Naive thymus-derived CD4-positive, alpha-beta T cell (primary cell): ENCODE measurements at regions of chr2 and their contacts with region 1.

Region 1: GRCh38 chr2:42810121-42810970 is 18.0 kb upstream of the HAAO start:
- DNase-seq: peak; percentile 96 to 99 (median 98)
- ATAC-seq: peak; percentile 90
- H3K4me3 ChIP-seq: peak overlapping the region; percentile 99
- H3K4me3 Mint-ChIP-seq: peak overlapping the region; percentile 90 to 99 (median 98)
- H3K27ac ChIP-seq: peak overlapping the region; percentile 99
- H3K27ac Mint-ChIP-seq: peak overlapping the region; percentile 93 to 100 (median 99)
- H3K4me1 ChIP-seq: peaks cover 0 to 3% of the 10 kb centered on the region in 2 donors
- H3K4me1 Mint-ChIP-seq: peaks cover 0 to 35% (median 20%) of the 10 kb centered on the region in 7 donors
- H3K27me3 ChIP-seq: no peaks in the 10 kb centered on the region
- H3K27me3 Mint-ChIP-seq: peaks cover 0 to 28% (median 0%) of the 10 kb centered on the region in 5 donors

Region 2: GRCh38 chr2:42360890-42361727 is 449.2 kb before region 1 on chr2 and contains the start of gene COX7A2L:
- CTCF ChIA-PET with region 1: no interaction called
- POLR2A ChIA-PET with region 1: interaction called, 21 read pairs
- intact Hi-C with region 1: loop called (anchors 1 kb)
- DNase-seq: peak; percentile 88 to 97 (median 96)
- ATAC-seq: peak; percentile 98
- H3K4me3 ChIP-seq: peak within 1 kb of the TSS; percentile 82
- H3K4me3 Mint-ChIP-seq: peak within 1 kb of the TSS; percentile 87 to 98 (median 95)
- H3K27ac ChIP-seq: peak within 1 kb of the TSS; percentile 92
- H3K27ac Mint-ChIP-seq: peak within 1 kb of the TSS; percentile 90 to 100 (median 98)
- H3K4me1 ChIP-seq: peaks cover 23 to 24% of the 10 kb centered on the region in 2 donors
- H3K4me1 Mint-ChIP-seq: peaks cover 33 to 56% (median 51%) of the 10 kb centered on the region in 7 donors
- H3K27me3 ChIP-seq: no peaks in the 10 kb centered on the region
- H3K27me3 Mint-ChIP-seq: no peaks in the 10 kb centered on the region
- total RNA-seq, gene COX7A2L: 57.3 to 87.7 (median 81.5) TPM

Region 3: GRCh38 chr2:42663106-42663780 is 147.1 kb before region 1 on chr2:
- CTCF ChIA-PET with region 1: interaction called, 3 read pairs
- POLR2A ChIA-PET with region 1: no interaction called
- intact Hi-C with region 1: loop called in 1 of 2 experiments (anchors 5 kb)
- DNase-seq: peak; percentile 26 to 85 (median 75)
- ATAC-seq: peak; percentile 96
- H3K4me3 ChIP-seq: no peak overlapping the region
- H3K4me3 Mint-ChIP-seq: peak overlapping the region in 7 of 10 donors; percentile 31 to 69 (median 53)
- H3K27ac ChIP-seq: peak overlapping the region; percentile 43
- H3K27ac Mint-ChIP-seq: peak overlapping the region in 8 of 9 donors; percentile 29 to 95 (median 83)
- H3K4me1 ChIP-seq: peaks cover 0 to 5% of the 10 kb centered on the region in 2 donors
- H3K4me1 Mint-ChIP-seq: peaks cover 8 to 60% (median 25%) of the 10 kb centered on the region in 7 donors
- H3K27me3 ChIP-seq: no peaks in the 10 kb centered on the region
- H3K27me3 Mint-ChIP-seq: no peaks in the 10 kb centered on the region

Region 4: DNA sequence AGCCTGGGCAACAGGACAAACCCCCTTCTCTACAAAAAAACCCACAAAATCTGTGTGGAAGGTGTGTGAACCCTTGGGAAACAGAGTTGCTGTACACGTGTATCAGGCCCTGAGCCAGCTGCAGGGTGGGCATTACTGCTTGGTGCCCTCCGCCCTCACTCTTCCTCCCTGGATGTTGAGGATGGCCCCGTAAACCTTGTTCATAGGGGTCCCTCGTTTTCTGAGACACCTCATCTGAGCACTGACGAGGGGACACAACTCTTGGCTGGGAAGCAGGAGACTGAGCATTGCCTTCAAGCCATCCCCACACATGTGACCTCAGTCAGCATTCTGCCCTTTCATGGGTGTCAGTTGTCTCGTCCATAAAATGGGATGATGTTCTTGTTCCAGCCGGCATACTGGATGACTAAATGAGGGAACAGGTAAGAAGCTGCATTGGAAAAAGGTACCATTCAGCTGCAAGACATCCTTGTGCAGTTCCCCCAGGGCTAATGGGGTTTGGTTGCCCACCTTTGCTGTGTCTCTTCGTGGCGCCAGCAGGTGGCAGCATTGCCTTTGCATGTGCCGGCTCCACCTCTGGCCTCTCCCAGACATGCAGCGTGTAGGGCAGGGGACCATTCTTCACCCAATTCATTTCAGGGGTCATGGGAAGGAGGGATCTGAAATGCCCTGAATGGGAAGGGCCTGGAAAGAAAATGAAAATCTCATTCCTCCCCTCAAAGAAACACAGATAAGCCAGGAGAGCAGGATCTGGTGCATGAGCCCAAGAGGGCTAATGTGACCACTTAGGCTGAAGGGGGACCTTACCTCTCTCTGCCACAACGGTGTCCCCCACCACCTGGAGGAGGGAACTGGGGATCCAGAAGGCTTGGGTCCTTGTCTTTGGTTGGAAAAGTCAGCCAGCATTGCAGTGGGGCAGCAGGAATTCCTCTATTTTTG is 18.4 kb after region 1 on chr2:
- CTCF ChIA-PET with region 1: interaction called, 7 read pairs
- POLR2A ChIA-PET with region 1: interaction called, 8 read pairs
- intact Hi-C with region 1: loop called (anchors 1 kb)
- DNase-seq: peak; percentile 44 to 69 (median 63)
- ATAC-seq: peak; percentile 93
- H3K4me3 ChIP-seq: no peak overlapping the region
- H3K4me3 Mint-ChIP-seq: peak overlapping the region in 6 of 10 donors; percentile 18 to 47 (median 21)
- H3K27ac ChIP-seq: no peak overlapping the region
- H3K27ac Mint-ChIP-seq: peak overlapping the region in 2 of 9 donors; percentile 21 to 25
- H3K4me1 ChIP-seq: peaks cover 3 to 6% of the 10 kb centered on the region in 2 donors
- H3K4me1 Mint-ChIP-seq: peaks cover 7 to 19% (median 14%) of the 10 kb centered on the region in 7 donors
- H3K27me3 ChIP-seq: no peaks in the 10 kb centered on the region
- H3K27me3 Mint-ChIP-seq: peaks cover 0 to 8% (median 5%) of the 10 kb centered on the region in 5 donors

Region 5: GRCh38 chr2:43210467-43211303 is 400.3 kb after region 1 on chr2:
- CTCF ChIA-PET with region 1: no interaction called
- POLR2A ChIA-PET with region 1: no interaction called
- intact Hi-C with region 1: no loop called
- DNase-seq: peak in 7 of 9 donors; percentile 34 to 67 (median 61)
- ATAC-seq: peak; percentile 81
- H3K4me3 ChIP-seq: no peak overlapping the region
- H3K4me3 Mint-ChIP-seq: peak overlapping the region in 9 of 10 donors; percentile 7 to 81 (median 56)
- H3K27ac ChIP-seq: no peak overlapping the region
- H3K27ac Mint-ChIP-seq: peak overlapping the region; percentile 2 to 94 (median 82)
- H3K4me1 ChIP-seq: peaks cover 0 to 27% of the 10 kb centered on the region in 2 donors
- H3K4me1 Mint-ChIP-seq: peaks cover 29 to 61% (median 44%) of the 10 kb centered on the region in 7 donors
- H3K27me3 ChIP-seq: no peaks in the 10 kb centered on the region
- H3K27me3 Mint-ChIP-seq: no peaks in the 10 kb centered on the region

Region 6: DNA sequence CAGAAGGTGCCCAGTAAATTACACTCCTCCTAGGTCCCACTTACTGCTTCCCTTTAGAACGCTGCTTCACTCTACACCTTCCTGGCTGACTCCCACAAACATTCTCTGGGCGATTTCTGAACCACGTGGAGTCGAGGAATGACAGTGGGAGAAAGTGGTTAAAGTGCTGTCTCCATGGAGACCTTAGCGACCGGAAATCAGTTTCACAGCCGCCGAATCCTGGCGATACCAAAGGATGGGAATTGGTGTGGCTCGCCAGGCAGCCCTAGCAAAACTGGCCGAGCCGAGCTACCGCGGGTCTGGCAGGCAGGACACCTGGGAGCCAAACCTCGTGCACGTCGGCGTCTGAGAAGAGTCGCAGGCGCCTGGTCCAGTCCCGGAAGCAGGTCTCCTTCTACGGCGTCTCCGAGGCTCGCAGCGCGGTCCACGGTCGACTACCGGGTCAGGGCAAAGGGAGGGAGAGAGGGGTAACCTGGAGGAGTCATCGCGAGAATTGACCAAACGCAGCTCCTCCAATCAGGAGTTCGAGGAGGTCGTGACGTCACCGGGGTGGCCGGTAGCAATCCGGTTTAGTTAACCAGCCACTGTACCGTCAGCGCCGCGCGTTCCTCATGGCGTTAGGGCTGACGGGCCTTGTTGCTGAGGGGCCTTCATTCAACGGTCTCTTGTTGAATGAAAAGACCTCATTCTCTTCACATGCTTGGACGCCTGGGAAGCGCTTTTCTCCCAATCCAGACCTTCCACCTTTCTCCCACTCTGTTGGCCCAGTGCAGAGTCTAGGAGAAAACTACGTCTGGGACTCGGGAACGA is 785.5 kb after region 1 on chr2 and contains the start of gene THADA:
- CTCF ChIA-PET with region 1: no interaction called
- POLR2A ChIA-PET with region 1: interaction called, 19 read pairs
- intact Hi-C with region 1: loop called (anchors 1 kb)
- DNase-seq: peak; percentile 83 to 94 (median 91)
- ATAC-seq: peak; percentile 98
- H3K4me3 ChIP-seq: peak within 1 kb of the TSS; percentile 79
- H3K4me3 Mint-ChIP-seq: peak within 1 kb of the TSS; percentile 82 to 96 (median 94)
- H3K27ac ChIP-seq: peak within 1 kb of the TSS; percentile 87
- H3K27ac Mint-ChIP-seq: peak within 1 kb of the TSS; percentile 90 to 98 (median 97)
- H3K4me1 ChIP-seq: peaks cover 9 to 13% of the 10 kb centered on the region in 2 donors
- H3K4me1 Mint-ChIP-seq: peaks cover 23 to 48% (median 38%) of the 10 kb centered on the region in 7 donors
- H3K27me3 ChIP-seq: no peaks in the 10 kb centered on the region
- H3K27me3 Mint-ChIP-seq: peaks cover 0 to 6% (median 3%) of the 10 kb centered on the region in 5 donors
- total RNA-seq, gene THADA: 34.1 to 43.0 (median 41.0) TPM

Region 7: GRCh38 chr2:43995733-43996533 is 1185.6 kb after region 1 on chr2 and contains the start of gene LRPPRC:
- CTCF ChIA-PET with region 1: no interaction called
- POLR2A ChIA-PET with region 1: no interaction called
- intact Hi-C with region 1: loop called (anchors 5 to 10 kb)
- DNase-seq: peak; percentile 69 to 95 (median 90)
- ATAC-seq: peak; percentile 98
- H3K4me3 ChIP-seq: peak within 1 kb of the TSS; percentile 98
- H3K4me3 Mint-ChIP-seq: peak within 1 kb of the TSS; percentile 89 to 99 (median 90)
- H3K27ac ChIP-seq: peak within 1 kb of the TSS; percentile 84
- H3K27ac Mint-ChIP-seq: peak within 1 kb of the TSS; percentile 95 to 100 (median 97)
- H3K4me1 ChIP-seq: peaks cover 9 to 25% of the 10 kb centered on the region in 2 donors
- H3K4me1 Mint-ChIP-seq: peaks cover 34 to 62% (median 52%) of the 10 kb centered on the region in 7 donors
- H3K27me3 ChIP-seq: no peaks in the 10 kb centered on the region
- H3K27me3 Mint-ChIP-seq: peaks cover 0 to 1% (median 0%) of the 10 kb centered on the region in 5 donors
- total RNA-seq, gene LRPPRC: 54.3 to 92.7 (median 71.2) TPM